Transverse colon (tissue), 4 donors: ENCODE measurements at regions of chr6 and their contacts with region 1.

Region 1: DNA sequence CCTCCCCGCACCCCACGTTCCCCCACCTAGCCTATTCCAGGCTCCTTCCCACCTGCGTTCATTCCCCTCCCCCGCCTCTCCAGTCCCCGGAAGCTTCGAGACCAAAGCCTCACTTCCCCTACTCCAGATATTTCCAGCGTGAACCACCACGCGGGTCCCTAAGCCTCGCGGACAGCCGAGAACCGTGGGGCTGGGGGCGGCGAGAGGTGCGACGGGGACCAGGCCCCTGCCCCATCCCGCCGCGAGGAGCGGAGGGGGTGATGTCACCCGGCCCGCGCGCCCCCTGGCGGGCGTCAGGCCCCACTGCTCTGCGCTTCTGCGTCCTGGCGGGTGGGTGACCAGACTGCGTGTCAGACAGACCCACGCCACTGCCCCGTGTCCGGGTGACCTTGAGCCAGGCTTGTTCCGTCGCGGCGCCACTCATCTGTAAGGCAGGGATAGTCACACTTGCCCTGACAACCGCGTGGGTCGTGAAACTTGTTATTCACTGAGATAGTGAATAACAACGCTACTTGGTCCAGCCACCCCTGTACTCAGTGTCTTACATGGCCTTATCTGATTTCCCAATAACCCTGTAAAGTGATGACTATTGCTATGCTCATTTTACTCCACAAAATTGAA is 9.0 kb upstream of the HSP90AB1 start:
- DNase-seq: peak; percentile 85
- H3K4me3 ChIP-seq: peak overlapping the region; percentile 36 to 62 (median 44)
- H3K27ac ChIP-seq: peak overlapping the region; percentile 91 to 94 (median 92)
- H3K4me1 ChIP-seq: peaks cover 30 to 48% (median 39%) of the 10 kb centered on the region in 4 donors
- H3K27me3 ChIP-seq: no peaks in the 10 kb centered on the region
- CTCF ChIP-seq: peak; percentile 98 to 99 (median 99)
- EP300 ChIP-seq: no peak
- POLR2A ChIP-seq: peak; percentile 55

Region 2: GRCh38 chr6:44151348-44152108 is 86.4 kb before region 1 on chr6:
- in situ Hi-C with region 1: no loop called
- intact Hi-C with region 1: no loop called
- DNase-seq: peak; percentile 79
- H3K4me3 ChIP-seq: no peak overlapping the region
- H3K27ac ChIP-seq: no peak overlapping the region
- H3K4me1 ChIP-seq: peaks cover 1 to 6% (median 4%) of the 10 kb centered on the region in 4 donors
- H3K27me3 ChIP-seq: no peaks in the 10 kb centered on the region
- CTCF ChIP-seq: peak; percentile 98 to 100 (median 99)
- EP300 ChIP-seq: no peak
- POLR2A ChIP-seq: no peak

Region 3: GRCh38 chr6:44161997-44162338 is 76.0 kb before region 1 on chr6:
- in situ Hi-C with region 1: loop called in 1 of 4 experiments (anchors 10 kb)
- intact Hi-C with region 1: no loop called
- DNase-seq: no peak
- H3K4me3 ChIP-seq: no peak overlapping the region
- H3K27ac ChIP-seq: no peak overlapping the region
- H3K4me1 ChIP-seq: peaks cover 0 to 1% (median 0%) of the 10 kb centered on the region in 4 donors
- H3K27me3 ChIP-seq: no peaks in the 10 kb centered on the region
- CTCF ChIP-seq: no peak
- EP300 ChIP-seq: no peak
- POLR2A ChIP-seq: no peak

Region 4: DNA sequence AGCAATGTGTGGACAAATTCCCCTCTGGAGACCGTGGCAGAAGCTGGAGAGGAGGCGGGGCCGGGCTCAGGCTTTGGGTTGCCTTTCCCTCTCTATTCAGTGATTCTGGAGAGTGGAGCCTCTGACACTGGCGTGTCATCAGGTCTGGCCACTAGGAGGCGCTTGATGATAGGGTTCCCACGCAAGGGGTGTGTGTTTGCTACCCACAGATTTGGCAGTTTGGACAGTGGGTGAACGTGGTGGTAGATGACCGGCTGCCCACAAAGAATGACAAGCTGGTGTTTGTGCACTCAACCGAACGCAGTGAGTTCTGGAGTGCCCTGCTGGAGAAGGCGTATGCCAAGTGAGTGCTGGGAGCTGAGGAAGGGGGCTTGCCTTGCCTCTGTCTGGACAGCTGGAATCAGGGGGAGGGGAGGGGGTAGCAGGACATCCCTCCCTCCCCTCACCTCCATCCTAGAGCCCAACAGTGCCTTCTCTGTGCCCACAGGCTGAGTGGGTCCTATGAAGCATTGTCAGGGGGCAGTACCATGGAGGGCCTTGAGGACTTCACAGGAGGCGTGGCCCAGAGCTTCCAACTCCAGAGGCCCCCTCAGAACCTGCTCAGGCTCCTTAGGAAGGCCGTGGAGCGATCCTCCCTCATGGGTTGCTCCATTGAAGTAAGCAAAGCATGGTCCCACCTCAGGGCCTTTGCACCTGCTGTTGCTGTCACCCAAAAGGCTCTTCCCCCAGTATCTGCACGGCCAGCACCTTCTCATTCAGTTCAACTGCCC is 65.0 kb before region 1 on chr6:
- in situ Hi-C with region 1: loop called in 2 of 4 experiments (anchors 10 kb)
- intact Hi-C with region 1: loop called (anchors 5 kb)
- DNase-seq: peak; percentile 87
- H3K4me3 ChIP-seq: no peak overlapping the region
- H3K27ac ChIP-seq: no peak overlapping the region
- H3K4me1 ChIP-seq: peaks cover 3 to 18% (median 10%) of the 10 kb centered on the region in 4 donors
- H3K27me3 ChIP-seq: no peaks in the 10 kb centered on the region
- CTCF ChIP-seq: peak; percentile 86 to 91 (median 89)
- EP300 ChIP-seq: no peak
- POLR2A ChIP-seq: no peak

Region 5: DNA sequence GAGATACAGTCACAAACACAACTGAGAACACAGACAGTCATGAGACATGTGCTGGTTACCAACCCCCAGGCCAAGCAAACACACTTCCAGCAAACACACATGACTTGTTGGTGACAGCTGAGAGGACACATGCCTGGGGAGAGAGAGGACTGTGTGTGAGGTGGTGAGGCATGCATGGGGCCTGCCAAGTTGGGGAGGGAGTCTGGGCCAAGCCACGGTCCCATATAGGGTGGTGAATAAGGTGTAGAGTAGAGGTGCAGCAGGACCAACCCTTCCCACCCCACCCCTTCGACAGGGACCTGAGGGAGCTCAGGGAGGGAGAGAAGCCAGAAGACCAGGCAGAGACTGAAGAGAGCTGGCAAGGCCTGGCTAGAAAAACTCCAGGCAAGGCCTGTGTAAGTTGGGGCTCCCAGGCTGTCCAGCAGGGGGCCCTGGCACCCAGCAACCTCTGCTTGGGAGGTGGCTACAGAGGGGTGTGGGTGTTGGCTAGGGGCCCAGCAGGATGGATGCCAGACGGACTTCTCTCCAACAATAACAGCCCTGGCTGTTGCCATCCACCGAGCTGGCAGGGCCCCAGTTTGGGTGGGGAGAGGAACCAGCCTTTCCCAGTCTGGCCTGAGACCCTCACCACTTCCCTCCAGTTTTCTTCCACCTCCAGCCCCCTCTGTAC is 16.5 kb before region 1 on chr6:
- in situ Hi-C with region 1: no loop called
- intact Hi-C with region 1: loop called (anchors 2 kb)
- DNase-seq: peak; percentile 96
- H3K4me3 ChIP-seq: peak overlapping the region in 1 of 4 donors; percentile 79
- H3K27ac ChIP-seq: peak overlapping the region; percentile 85 to 94 (median 86)
- H3K4me1 ChIP-seq: peaks cover 43 to 92% (median 74%) of the 10 kb centered on the region in 4 donors
- H3K27me3 ChIP-seq: peaks cover 4% of the 10 kb centered on the region
- CTCF ChIP-seq: peak; percentile 76 to 92 (median 84)
- EP300 ChIP-seq: no peak
- POLR2A ChIP-seq: no peak